OCI-LY7 (cell line): ENCODE measurements at regions of chr1 and their contacts with region 1.

Region 1: GRCh38 chr1:37692078-37692833 is at the start of gene CDCA8:
- DNase-seq: peak; percentile 98
- H3K4me3 ChIP-seq: peak within 1 kb of the TSS; percentile 99
- H3K27ac ChIP-seq: peak within 1 kb of the TSS; percentile 76
- H3K4me1 ChIP-seq: peaks cover 36% of the 10 kb centered on the region
- CTCF ChIP-seq: peak; percentile 76
- total RNA-seq, gene CDCA8: 55.2 and 60.0 TPM in 2 replicates

Region 2: GRCh38 chr1:37514350-37515184 is 177.7 kb before region 1 on chr1 and contains the start of gene MEAF6:
- CTCF ChIA-PET with region 1: interaction called, 4 read pairs
- POLR2A ChIA-PET with region 1: interaction called, 4 read pairs
- intact Hi-C with region 1: loop called (anchors 5 kb)
- DNase-seq: peak; percentile 92
- H3K4me3 ChIP-seq: peak within 1 kb of the TSS; percentile 82
- H3K27ac ChIP-seq: peak within 1 kb of the TSS; percentile 47
- H3K4me1 ChIP-seq: peaks cover 16% of the 10 kb centered on the region
- CTCF ChIP-seq: peak; percentile 83
- total RNA-seq, gene MEAF6: 74.3 and 121 TPM in 2 replicates

Region 3: DNA sequence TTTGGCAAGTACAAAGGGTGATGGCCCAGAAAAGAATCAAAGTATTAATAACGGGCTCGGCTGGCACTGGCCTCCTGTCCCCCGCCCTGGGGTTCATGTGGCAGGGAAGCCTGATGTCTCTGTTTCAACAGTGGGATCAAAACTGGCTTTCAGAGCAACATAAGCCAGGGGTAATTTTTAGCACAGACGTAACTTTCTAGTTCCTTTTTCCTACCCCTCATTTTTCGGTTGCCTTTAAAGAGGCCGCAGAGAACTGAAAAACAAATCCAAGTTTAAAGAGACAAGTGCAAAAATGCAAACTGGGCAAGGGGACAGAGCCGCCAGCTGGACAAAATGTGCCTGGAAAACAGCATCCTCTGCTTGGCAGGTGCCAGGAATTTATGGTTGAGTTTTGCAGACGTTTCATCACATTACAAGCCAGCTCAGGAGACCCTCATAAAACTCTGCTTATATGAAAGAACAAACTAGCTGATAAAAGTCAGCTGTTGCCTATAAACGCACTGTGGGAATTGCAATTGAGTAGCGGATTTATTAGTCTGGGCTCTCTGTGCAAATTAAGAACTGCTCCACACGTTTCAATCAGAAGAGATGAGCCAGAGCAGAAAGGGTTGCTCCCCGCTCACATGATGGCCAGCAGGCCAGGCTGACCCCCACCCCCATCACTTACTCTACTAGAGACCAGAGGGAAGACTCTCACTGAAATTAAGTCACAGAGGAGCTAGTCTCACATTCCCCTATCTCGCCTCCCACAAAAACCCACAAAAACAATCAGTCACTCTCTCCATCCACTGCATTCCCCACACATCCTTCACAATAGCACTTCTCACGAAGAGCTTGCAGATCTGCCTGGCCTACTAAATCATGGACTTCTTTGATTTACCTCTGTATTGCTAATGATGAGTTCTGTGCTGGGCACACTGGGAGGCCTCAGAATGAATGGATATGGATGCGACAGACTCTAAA is 15.7 kb before region 1 on chr1:
- CTCF ChIA-PET with region 1: interaction called, 6 read pairs
- POLR2A ChIA-PET with region 1: interaction called, 10 read pairs
- intact Hi-C with region 1: no loop called
- DNase-seq: peak; percentile 81
- H3K4me3 ChIP-seq: peak overlapping the region; percentile 50
- H3K27ac ChIP-seq: peak overlapping the region; percentile 85
- H3K4me1 ChIP-seq: peaks cover 63% of the 10 kb centered on the region
- CTCF ChIP-seq: peak; percentile 56; the same call in 1 of the 2 replicates

Region 4: DNA sequence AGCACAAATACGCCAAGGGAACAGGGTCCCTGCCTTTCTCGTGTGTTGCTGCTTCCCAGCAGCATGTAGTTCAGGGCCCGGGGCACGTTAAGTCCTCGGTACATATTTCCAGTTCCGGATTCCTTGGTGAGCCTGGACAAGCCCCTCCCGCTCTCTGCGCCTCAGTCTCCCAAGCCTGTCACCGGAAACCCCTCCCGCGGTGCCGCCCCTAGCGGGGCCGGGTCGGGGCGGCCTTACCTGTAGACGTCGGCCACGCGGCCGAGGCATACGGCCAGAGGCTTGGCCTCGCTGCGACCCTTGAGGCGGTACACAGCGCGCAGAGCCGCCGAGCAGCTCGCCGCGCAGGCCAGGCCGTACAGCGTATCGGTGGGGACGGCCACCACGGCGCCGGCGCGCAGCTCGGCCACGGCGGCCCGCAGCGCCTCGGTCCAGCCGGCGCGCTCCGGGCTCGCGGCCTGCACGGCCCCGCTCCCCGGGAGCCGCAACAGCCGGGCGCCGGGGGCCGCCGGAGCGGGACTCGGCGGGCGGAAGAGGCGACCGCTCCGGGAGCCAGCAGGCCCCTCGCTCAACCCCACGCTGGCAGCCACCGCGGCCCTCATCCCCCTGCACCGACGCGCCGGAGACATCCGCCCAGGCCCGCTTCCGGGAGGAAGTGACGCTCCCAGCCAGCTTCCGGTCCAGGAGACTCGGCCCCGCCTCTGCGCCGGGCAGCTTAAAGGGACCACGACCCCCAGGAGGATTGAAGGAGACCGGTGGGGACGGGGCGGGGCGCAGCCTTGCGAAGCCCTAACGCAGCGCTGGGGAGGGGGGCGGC is 115.5 kb after region 1 on chr1 and contains the starts of genes C1orf122 and YRDC:
- CTCF ChIA-PET with region 1: no interaction called
- POLR2A ChIA-PET with region 1: no interaction called
- intact Hi-C with region 1: loop called (anchors 2 kb)
- DNase-seq: peak; percentile 95
- H3K4me3 ChIP-seq: peak within 1 kb of the TSS; percentile 91
- H3K27ac ChIP-seq: peak within 1 kb of the TSS; percentile 32
- H3K4me1 ChIP-seq: peaks cover 27% of the 10 kb centered on the region
- CTCF ChIP-seq: no peak
- total RNA-seq, gene C1orf122: 18.9 and 26.0 TPM in 2 replicates
- total RNA-seq, gene YRDC: 27.6 and 33.6 TPM in 2 replicates

Region 5: GRCh38 chr1:37859507-37860345 is 167.5 kb after region 1 on chr1 and contains the start of gene MTF1:
- CTCF ChIA-PET with region 1: no interaction called
- POLR2A ChIA-PET with region 1: interaction called, 7 read pairs
- intact Hi-C with region 1: loop called (anchors 2 kb)
- DNase-seq: peak; percentile 98
- H3K4me3 ChIP-seq: peak within 1 kb of the TSS; percentile 84
- H3K27ac ChIP-seq: peak within 1 kb of the TSS; percentile 71
- H3K4me1 ChIP-seq: peaks cover 25% of the 10 kb centered on the region
- CTCF ChIP-seq: peak; percentile 90
- total RNA-seq, gene MTF1: 1.6 and 1.8 TPM in 2 replicates

Region 6: DNA sequence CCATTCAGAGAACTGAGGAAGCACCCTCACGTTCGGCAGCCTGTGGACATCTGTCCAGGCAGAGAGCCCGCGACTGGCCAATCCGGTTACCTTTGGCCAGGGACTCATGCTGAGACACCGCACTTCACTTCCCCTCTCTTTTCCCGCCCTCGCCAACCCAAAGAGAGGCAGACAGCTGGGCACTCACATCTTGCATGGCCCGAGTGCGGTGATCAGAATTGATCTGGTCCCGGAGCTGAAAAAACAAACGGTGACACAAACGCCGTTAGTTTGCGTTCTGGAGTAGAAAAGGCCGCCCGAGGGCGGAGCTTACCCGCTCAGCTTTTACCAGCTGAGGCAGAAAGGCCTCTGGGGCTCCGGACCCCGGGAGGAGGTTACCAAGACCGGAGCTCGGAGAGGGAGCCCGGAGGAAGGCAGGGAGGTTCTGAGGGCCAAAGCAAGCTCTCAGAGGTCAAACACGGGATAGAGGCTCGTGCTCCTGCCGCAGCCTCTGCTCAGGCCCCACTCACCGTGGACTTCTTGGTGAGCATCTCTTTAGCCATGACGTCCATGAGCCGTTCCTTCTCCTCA is 297.2 kb after region 1 on chr1:
- CTCF ChIA-PET with region 1: no interaction called
- POLR2A ChIA-PET with region 1: no interaction called
- intact Hi-C with region 1: loop called (anchors 10 kb)
- DNase-seq: peak; percentile 56
- H3K4me3 ChIP-seq: peak overlapping the region; percentile 100
- H3K27ac ChIP-seq: peak overlapping the region; percentile 71
- H3K4me1 ChIP-seq: peaks cover 12% of the 10 kb centered on the region
- CTCF ChIP-seq: no peak

Region 7: DNA sequence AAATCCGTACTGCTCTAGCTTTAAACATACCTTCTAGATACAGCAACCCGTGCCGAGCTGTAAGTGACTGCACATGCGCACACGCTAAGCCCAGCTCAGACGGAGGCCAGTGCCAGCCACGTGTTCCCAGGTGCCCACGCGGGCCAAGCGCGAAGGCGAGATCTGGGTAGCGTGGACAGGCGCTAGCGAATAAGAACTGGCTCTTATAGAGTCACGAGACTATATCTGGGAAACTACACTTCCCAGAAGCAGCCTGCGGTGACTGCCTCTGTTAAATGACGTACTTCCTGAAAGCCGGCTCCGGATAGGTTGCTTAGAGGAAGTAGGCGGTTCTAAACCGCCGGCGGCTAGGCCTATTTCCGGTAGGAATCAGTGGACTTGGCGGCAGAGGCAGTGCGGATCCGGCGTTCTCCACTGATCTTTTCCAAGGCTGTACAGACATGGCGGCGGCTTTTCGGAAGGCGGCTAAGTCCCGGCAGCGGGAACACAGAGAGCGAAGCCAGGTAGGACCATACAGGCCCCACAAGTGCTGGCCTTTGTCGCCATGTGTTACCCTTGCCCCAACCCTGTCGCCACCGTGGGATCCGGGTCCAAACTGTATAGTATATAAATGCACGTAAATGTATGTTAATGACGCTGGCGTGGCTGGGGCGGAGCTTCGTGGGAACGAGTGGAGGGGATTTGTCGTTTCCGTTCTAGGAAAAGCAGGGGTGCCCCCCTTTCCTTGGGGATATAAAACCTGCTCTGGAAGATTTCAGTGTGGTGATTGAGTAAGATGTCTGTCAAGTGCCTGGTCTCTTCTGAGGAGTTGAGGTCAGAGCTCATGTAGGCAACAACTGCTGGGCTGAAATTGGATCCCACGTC is 320.3 kb after region 1 on chr1 and contains the start of gene UTP11:
- CTCF ChIA-PET with region 1: no interaction called
- POLR2A ChIA-PET with region 1: interaction called, 3 read pairs
- intact Hi-C with region 1: loop called (anchors 10 kb)
- DNase-seq: peak; percentile 98
- H3K4me3 ChIP-seq: peak within 1 kb of the TSS; percentile 81
- H3K27ac ChIP-seq: peak within 1 kb of the TSS; percentile 65
- H3K4me1 ChIP-seq: peaks cover 22% of the 10 kb centered on the region
- CTCF ChIP-seq: no peak
- total RNA-seq, gene UTP11: 43.8 and 61.1 TPM in 2 replicates